BJ (cell line): ENCODE measurements at regions of chr2 and their contacts with region 1.

Region 1: DNA sequence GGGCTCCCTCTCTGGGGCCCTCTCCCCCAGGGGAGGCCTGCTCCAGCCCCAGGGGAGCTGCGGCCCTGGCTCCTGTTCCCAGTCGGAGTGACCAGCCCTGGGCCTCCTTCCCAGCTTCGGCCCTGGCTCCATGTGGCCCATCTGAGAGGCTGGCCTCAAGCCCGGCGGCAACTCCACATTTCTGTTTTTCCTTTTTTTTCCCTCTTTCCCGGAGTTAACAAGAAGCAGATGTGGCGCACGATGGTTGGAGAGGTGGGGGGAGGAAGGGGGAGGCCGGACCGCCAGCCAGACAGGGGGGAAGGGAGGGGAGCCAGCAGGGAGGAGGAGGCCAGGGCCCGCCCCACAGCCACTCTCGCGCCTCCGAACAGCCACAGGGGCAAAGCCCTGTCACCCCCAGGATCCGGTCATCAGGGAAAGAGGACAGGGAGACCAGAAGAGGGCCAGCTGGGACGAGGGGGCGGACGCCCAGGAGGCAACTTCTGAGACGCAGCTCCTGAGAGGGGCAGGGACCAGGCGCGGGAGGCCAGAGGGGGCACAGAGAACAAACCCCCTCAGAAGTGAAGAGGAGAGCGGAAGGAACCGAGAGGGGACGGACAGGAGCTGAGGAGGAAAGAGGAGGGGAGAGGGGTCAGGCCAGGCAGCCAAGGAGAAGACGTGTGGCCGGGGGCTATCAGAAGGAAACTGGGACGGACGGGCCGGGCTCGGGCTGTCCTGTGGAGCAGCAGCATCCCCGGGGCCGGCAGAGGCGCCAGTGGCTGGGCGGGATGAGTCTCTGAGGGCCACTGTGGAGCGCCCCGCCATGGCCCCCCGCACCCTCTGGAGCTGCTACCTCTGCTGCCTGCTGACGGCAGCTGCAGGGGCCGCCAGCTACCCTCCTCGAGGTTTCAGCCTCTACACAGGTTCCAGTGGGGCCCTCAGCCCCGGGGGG is at the start of gene EMILIN1:
- DNase-seq: peak; percentile 84
- H3K4me3 ChIP-seq: peak within 1 kb of the TSS; percentile 53
- H3K27me3 ChIP-seq: no peaks in the 10 kb centered on the region
- CTCF ChIP-seq: 0 out of 2 replicates have a peak, but pooled peaks have one; percentile 14
- polyA plus RNA-seq, gene EMILIN1: 43.4 and 81.3 TPM in 2 replicates

Region 2: DNA sequence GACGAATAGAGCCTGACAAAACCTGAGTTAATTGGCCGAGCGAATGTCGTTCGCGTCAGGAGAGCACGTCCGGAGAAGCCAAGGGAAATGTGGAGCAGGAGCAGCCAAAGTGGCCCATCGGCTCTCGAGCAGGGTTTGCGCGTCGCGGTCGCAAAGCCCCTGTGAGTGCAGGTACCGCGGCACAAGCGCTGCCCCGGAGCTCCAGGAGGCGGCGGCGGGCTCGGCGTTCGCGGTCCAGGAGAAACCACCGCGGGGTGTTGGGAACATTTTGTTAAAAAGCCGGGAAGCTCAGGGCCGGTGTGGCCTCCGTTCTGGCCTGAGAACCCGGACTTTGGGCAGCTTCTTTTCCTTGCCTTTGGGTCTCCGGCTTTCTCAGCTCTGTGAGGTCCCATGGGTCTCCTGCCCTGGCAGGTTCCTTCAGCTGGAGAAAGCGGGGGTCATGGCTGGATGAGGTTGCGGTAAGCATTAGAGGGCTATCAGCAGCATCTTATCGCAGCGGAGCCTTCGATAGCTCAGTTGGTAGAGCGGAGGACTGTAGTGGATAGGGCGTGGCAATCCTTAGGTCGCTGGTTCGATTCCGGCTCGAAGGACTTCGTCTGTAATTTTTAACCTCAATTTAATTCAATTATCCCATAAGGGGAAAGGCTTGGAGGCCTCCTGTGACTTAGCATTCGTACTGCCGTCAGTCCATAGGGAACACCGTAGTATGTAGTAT is 28.1 kb before region 1 on chr2:
- CTCF ChIA-PET with region 1: interaction called, 28 read pairs
- POLR2A ChIA-PET with region 1: interaction called, 3 read pairs
- DNase-seq: no peak
- H3K4me3 ChIP-seq: peak overlapping the region; percentile 66
- H3K27me3 ChIP-seq: no peaks in the 10 kb centered on the region
- CTCF ChIP-seq: peak; percentile 53; the same call in 1 of the 2 replicates

Region 3: GRCh38 chr2:27059141-27059820 is 19.2 kb before region 1 on chr2:
- CTCF ChIA-PET with region 1: interaction called, 11 read pairs
- POLR2A ChIA-PET with region 1: no interaction called
- DNase-seq: no peak
- H3K4me3 ChIP-seq: no peak overlapping the region
- H3K27me3 ChIP-seq: no peaks in the 10 kb centered on the region
- CTCF ChIP-seq: no peak

Region 4: DNA sequence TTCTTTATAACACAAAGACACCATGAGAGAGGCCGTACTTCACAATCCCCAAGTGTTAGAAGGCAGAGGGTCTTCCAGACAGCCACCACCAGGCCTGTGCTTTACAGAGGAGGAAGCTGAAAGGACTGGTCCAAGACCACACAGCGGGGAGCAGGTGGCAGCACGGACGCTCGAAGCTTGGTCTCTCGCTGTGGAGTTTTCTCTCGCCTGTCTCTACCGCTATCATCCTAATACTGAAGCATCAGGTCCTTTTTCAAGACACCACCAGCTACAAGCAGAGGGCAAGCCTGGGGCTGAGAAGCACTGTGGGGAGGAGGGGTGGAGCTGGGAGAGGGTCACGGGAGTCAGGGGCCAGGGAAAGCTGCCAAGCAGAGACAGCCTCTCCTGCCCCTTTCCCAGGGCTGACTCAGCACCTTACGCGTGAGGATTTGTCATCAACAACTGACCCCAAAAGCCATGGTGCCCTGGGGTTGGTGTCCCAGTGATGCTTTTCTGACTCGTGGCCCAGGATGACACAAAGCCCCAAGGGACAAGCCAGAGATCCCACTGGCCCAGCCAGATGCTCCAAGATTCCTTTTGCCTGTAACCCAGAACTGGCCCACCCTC is 1282.3 kb after region 1 on chr2:
- CTCF ChIA-PET with region 1: no interaction called
- POLR2A ChIA-PET with region 1: interaction called, 13 read pairs
- DNase-seq: no peak
- H3K4me3 ChIP-seq: no peak overlapping the region
- H3K27me3 ChIP-seq: no peaks in the 10 kb centered on the region
- CTCF ChIP-seq: no peak